Common myeloid progenitor, CD34-positive (primary cell): ENCODE measurements at regions of chr12 and their contacts with region 1.

Region 1: GRCh38 chr12:95918194-95918993 is 24.0 kb downstream of the CCDC38 start:
- DNase-seq: peak; percentile 48 to 72 (median 70)
- H3K4me3 ChIP-seq: no peak overlapping the region
- H3K27ac ChIP-seq: no peak overlapping the region
- H3K4me1 ChIP-seq: no peaks in the 10 kb centered on the region
- H3K27me3 ChIP-seq: peaks cover 0 to 5% (median 0%) of the 10 kb centered on the region in 5 experiments

Region 2: DNA sequence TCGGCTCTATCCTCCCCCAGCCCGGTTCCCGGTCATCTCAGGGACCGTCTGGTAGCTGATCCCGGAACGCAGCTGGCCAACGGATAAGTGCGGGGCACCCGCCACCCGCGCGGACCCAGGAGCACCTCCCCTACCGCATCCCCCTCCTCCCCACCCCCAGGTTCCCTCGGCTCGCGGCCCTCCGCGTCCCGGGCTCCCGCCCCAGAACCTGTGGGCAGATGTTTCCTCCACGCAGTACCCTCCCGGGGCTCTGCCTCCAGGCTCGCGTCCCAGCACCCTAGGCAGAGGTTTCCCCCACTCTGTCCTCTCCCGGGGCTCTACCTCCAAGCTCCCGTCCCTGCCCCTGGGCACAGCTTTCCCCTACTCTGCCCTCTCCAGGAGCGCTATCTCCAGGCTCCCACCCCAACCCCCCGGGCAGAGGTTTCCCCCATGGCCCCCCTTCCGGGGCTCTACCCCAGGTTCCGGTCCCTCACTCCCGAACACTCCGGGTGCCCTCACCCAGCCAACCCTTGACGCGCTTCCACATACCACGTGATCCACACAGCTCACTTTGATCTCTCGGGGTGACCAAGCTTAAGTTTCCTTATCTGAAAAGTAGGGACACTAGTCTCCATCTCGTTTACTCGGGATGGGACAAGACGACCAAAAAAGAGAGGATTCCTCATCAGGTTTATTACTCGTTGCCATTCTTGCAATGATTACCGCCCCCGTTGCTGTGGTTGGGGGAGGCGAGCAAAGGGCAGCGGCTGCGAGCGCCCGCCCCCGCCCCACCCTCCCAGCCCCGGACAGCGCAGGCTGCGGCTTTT is 24.3 kb after region 1 on chr12 and contains the start of gene CCDC38:
- CTCF ChIA-PET with region 1: interaction called, 17 read pairs
- POLR2A ChIA-PET with region 1: no interaction called
- DNase-seq: peak; percentile 79 to 90 (median 86)
- H3K4me3 ChIP-seq: peak within 1 kb of the TSS; percentile 25 to 90 (median 86)
- H3K27ac ChIP-seq: peak within 1 kb of the TSS; percentile 54 to 68
- H3K4me1 ChIP-seq: peaks cover 0 to 13% (median 7%) of the 10 kb centered on the region in 4 experiments
- H3K27me3 ChIP-seq: no peaks in the 10 kb centered on the region

Region 3: DNA sequence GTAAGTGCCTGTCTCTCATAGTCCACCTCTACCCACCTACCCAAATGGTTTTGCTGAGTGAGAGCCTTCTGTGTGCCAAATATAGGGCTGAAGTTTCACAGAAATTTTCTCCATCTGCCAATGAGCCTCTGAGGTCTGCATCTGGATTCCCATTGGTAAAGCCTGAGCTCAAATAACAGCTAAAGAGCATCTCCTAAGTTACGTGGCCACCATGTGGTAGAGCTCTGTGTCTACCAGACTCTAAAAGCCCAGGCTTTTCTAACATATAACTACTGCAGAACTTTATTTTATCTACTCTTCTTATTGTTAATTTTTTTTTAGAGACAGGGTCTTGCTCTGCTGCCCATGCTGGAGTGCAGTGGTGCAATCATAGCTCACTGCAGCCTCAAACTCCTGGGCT is 40.7 kb after region 1 on chr12:
- CTCF ChIA-PET with region 1: interaction called, 32 read pairs
- POLR2A ChIA-PET with region 1: no interaction called
- DNase-seq: peak; percentile 28 to 58 (median 58)
- H3K4me3 ChIP-seq: no peak overlapping the region
- H3K27ac ChIP-seq: no peak overlapping the region
- H3K4me1 ChIP-seq: peaks cover 0 to 4% (median 0%) of the 10 kb centered on the region in 4 experiments
- H3K27me3 ChIP-seq: peaks cover 0 to 2% (median 0%) of the 10 kb centered on the region in 5 experiments

Region 4: DNA sequence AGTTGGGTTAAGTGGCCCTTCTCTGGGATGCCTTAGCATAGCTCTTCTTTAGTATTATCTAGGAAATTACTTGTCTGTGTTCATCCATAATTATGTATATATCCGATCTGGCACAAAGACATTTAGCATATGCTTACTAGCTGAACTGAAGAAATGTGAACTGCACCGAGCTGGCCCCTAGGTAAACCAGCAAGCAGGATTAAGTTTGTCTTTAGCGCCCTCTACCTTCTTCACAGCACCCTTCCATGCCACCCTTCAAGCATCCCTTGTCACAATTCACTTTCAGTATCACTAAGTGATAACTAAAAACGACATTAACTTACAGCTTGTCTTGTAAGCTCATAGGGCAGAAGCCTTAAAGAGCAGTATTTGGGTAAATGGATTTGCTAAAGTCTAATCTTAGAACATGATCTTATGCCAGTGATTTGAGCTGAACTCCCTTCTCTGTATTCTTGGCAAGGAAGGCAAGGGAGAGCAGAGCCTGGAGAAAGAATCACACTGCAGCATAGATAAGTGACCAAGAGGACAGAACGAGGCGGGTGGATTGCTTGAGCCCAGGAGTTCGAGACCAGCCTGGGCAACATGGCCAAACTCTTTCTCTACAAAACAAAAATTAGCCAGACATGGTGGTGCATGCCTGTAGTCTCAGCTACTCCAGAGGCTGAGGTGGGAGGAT is 80.4 kb after region 1 on chr12:
- CTCF ChIA-PET with region 1: interaction called, 51 read pairs
- POLR2A ChIA-PET with region 1: no interaction called
- DNase-seq: peak; percentile 65 to 90 (median 88)
- H3K4me3 ChIP-seq: no peak overlapping the region
- H3K27ac ChIP-seq: no peak overlapping the region
- H3K4me1 ChIP-seq: peaks cover 0 to 9% (median 5%) of the 10 kb centered on the region in 4 experiments
- H3K27me3 ChIP-seq: no peaks in the 10 kb centered on the region